Mammary epithelial cell (primary cell): ENCODE measurements at regions of chr2 and their contacts with region 1.

Region 1: DNA sequence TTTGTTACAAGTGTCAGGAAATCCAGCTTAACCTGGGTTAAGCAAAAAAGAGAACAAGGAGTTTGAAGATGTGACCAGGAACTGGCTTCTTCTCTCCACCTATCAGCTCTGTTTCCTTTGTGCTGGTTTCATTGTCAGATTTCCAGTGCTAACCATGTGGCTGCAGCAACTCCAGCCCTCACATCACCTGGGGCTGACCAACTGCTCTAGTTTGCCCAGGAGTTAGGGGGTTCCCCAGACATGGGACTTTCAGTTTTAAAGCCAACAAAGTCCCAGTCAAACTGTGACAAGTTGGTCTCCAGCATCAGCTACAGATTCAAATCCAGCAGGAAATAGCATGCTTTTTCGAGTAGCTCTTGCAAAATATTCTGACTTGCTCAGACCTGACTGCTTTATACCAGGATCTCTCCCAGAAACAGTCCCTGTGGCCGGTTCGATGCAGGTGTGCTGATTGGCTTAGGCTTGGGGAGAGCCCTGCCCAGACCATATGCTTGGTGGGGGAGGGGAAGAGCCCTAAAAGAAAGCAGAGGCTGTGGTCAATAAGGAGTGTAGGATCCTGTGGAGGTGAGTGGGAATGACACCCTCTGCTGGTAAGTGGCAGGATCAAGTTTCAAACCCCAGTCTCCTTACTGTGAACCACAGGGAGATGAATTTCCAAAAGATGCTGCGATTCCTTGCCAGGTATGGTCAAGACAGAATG is 49.5 kb downstream of the KCNE4 start:
- DNase-seq: peak; percentile 90
- H3K4me3 ChIP-seq: no peak overlapping the region
- H3K27ac ChIP-seq: peak overlapping the region; percentile 13
- H3K4me1 ChIP-seq: peaks cover 24% of the 10 kb centered on the region
- H3K27me3 ChIP-seq: no peaks in the 10 kb centered on the region
- CTCF ChIP-seq: peak; percentile 54 to 66

Region 2: DNA sequence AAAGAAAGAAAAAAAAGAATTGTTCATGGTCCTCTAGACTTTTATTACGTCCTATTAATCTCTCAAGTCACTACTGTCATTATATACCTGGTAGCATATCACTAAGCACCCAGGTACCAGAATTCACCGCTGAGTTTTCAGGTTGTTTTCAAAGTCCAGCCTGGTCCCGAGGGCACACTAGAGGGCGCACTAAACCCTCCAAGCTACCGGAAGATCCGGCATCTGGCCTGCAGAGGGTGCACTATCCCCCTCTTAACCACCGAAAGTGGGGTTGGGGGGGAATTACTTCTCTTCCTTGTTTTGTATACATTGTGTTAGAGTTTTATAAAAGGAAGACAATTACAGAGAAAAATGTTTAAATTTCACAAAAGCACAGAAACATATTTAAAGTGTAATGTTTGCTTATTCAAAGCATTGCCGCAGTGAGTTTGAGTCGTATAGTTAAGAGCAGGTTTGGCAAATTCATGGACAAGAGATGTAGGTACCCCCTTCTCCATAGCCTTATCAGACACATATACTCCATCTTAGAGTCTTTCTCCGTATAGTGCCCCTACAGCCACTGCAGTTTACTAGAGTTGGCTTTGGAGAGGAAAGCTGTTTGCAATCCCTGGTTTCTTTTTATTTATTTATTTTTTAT is 410.8 kb before region 1 on chr2:
- CTCF ChIA-PET with region 1: no interaction called
- dilution Hi-C with region 1: no loop called
- in situ Hi-C with region 1: no loop called
- intact Hi-C with region 1: loop called (anchors 5 kb)
- DNase-seq: peak; percentile 45
- H3K4me3 ChIP-seq: no peak overlapping the region
- H3K27ac ChIP-seq: no peak overlapping the region
- H3K4me1 ChIP-seq: no peaks in the 10 kb centered on the region
- H3K27me3 ChIP-seq: no peaks in the 10 kb centered on the region
- CTCF ChIP-seq: peak; percentile 100

Region 3: GRCh38 chr2:222969491-222969890 is 132.0 kb before region 1 on chr2:
- CTCF ChIA-PET with region 1: no interaction called
- dilution Hi-C with region 1: loop called (anchors 5 kb)
- in situ Hi-C with region 1: no loop called
- intact Hi-C with region 1: loop called (anchors 1 kb)
- DNase-seq: no peak
- H3K4me3 ChIP-seq: no peak overlapping the region
- H3K27ac ChIP-seq: no peak overlapping the region
- H3K4me1 ChIP-seq: peaks cover 24% of the 10 kb centered on the region
- H3K27me3 ChIP-seq: no peaks in the 10 kb centered on the region
- CTCF ChIP-seq: no peak

Region 4: GRCh38 chr2:222982010-222982908 is 119.2 kb before region 1 on chr2:
- CTCF ChIA-PET with region 1: interaction called, 3 read pairs
- dilution Hi-C with region 1: no loop called
- in situ Hi-C with region 1: loop called (anchors 5 to 10 kb)
- intact Hi-C with region 1: loop called (anchors 1 kb)
- DNase-seq: peak; percentile 58
- H3K4me3 ChIP-seq: no peak overlapping the region
- H3K27ac ChIP-seq: no peak overlapping the region
- H3K4me1 ChIP-seq: peaks cover 7% of the 10 kb centered on the region
- H3K27me3 ChIP-seq: no peaks in the 10 kb centered on the region
- CTCF ChIP-seq: peak; percentile 49 to 77

Region 5: DNA sequence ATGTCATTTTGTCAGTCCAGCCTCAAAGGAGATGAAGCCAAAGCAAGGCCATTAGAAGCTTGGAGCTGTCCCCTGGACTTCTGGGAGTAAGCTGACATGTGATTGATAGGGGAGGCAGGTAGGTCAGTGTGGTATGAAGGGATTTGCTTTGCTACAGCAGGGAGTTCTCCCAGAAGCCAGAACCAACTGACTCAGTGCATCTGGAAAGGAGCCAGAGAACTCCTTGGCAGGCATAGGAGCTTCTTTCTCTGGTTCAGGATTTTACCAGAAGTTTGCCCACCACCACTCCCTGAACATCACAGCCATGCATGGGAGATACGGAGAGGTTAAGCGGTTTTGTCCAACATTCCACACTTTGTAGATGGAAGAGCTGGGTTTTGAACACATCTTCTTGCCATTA is 74.0 kb before region 1 on chr2:
- CTCF ChIA-PET with region 1: no interaction called
- dilution Hi-C with region 1: no loop called
- in situ Hi-C with region 1: no loop called
- intact Hi-C with region 1: no loop called
- DNase-seq: peak; percentile 70
- H3K4me3 ChIP-seq: no peak overlapping the region
- H3K27ac ChIP-seq: no peak overlapping the region
- H3K4me1 ChIP-seq: peaks cover 5% of the 10 kb centered on the region
- H3K27me3 ChIP-seq: no peaks in the 10 kb centered on the region
- CTCF ChIP-seq: no peak

Region 6: GRCh38 chr2:223148516-223148915 is 47.0 kb after region 1 on chr2:
- CTCF ChIA-PET with region 1: no interaction called
- dilution Hi-C with region 1: loop called (anchors 5 kb)
- in situ Hi-C with region 1: no loop called
- intact Hi-C with region 1: no loop called
- DNase-seq: no peak
- H3K4me3 ChIP-seq: no peak overlapping the region
- H3K27ac ChIP-seq: no peak overlapping the region
- H3K4me1 ChIP-seq: peaks cover 3% of the 10 kb centered on the region
- H3K27me3 ChIP-seq: no peaks in the 10 kb centered on the region
- CTCF ChIP-seq: no peak